GM18951 (cell line): ENCODE measurements at regions of chr17 and their contacts with region 1.

Region 1: GRCh38 chr17:30415491-30415890 is 36.8 kb downstream of the CPD start:
- POLR2A ChIP-seq: no peak

Region 2: GRCh38 chr17:30450118-30451013 is 34.9 kb after region 1 on chr17:
- in situ Hi-C with region 1: loop called (anchors 5 kb)
- POLR2A ChIP-seq: no peak